ENCODE measurements at regions of chr11 and their contacts with region 1.

Region 1: DNA sequence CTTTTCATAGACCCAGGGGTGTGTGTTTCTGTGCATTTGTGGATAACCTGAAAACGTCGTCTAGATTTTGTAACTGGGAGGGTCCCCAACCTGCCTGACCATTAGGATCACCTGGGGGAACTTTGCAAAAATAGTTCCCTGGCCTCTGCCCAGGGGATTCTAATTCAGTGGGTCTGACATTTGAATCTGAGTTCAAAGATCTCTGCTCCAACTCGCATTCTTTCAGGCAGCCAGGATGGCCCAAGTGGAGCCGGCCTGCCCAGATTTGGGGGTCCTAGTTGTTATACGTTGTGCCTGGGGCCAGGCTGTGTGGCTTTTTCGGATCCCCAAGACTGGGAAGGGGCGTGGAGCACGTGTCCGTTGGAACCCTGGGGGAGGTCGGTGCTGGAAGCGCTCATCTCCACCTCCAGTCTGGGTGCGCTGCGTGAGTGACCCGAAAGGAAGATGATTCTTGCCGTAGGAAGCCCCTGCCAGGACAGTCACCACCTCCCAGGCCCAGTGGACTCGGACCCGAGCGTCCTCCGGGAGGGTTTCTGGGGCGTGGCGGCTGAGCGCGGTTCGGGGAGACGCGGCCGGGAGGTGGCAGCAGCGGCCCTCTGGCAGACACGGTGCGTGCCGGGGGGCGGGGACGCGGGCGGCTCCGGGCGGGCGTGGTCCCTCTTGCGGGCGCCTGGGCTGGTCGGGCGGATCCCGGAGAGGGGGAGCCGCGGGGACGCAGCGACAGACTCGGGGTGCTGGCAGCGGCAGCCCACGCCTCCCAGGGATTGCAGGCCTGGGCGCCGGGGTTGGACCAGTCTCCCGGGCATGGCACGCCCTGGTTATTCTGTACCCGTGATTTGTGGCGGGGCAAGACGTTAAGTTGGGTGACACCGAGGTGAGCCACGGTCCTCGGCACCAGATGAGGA is 29.2 kb upstream of the PLET1 start:
- DNase-seq: peak; percentile 82 to 94 (median 92)
- ATAC-seq: peak; percentile 99
- H3K4me3 ChIP-seq: peak overlapping the region; percentile 33
- H3K27ac ChIP-seq: no peak overlapping the region
- H3K4me1 ChIP-seq: peaks cover 20 to 21% of the 10 kb centered on the region in 2 experiments; a peak in 4 of 5 replicates
- H3K27me3 ChIP-seq: peaks cover 2 to 3% of the 10 kb centered on the region in 2 experiments; a peak in 2 of 5 replicates
- CTCF ChIP-seq: peak; percentile 76 to 95 (median 84)
- EP300 ChIP-seq: no peak
- POLR2A ChIP-seq: no peak
- RAD21 ChIP-seq: peak; percentile 85 to 91

Region 2: DNA sequence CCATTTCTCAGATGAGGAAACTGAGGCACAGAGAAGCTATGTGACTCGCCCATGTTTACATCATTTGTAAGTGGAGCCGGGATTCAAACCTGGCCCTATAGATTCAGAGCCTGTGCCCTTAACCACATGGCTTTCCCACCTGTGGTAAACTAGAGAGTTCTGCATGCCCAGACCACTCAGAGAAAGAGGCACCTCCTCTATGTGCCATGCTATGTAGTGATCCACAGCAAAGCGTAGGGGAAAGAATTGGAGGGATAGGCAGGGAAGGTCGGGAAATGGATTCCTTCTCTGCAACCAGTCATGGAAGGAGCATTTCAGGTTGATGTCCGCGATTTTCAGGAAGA is 1059.7 kb before region 1 on chr11:
- CTCF ChIA-PET with region 1: no interaction called
- POLR2A ChIA-PET with region 1: no interaction called
- in situ Hi-C with region 1: no loop called
- intact Hi-C with region 1: no loop called
- DNase-seq: no peak
- ATAC-seq: peak; percentile 62
- H3K4me3 ChIP-seq: no peak overlapping the region
- H3K27ac ChIP-seq: no peak overlapping the region
- H3K4me1 ChIP-seq: no peaks in the 10 kb centered on the region; a peak in 1 of 5 replicates
- H3K27me3 ChIP-seq: no peaks in the 10 kb centered on the region
- CTCF ChIP-seq: no peak
- EP300 ChIP-seq: no peak
- POLR2A ChIP-seq: no peak
- RAD21 ChIP-seq: no peak

Region 3: GRCh38 chr11:112273066-112273465 is 16.8 kb before region 1 on chr11:
- CTCF ChIA-PET with region 1: no interaction called
- POLR2A ChIA-PET with region 1: no interaction called
- in situ Hi-C with region 1: no loop called
- intact Hi-C with region 1: no loop called
- DNase-seq: no peak
- ATAC-seq: no peak
- H3K4me3 ChIP-seq: no peak overlapping the region
- H3K27ac ChIP-seq: no peak overlapping the region
- H3K4me1 ChIP-seq: peaks cover 0 to 9% of the 10 kb centered on the region in 2 experiments; a peak in 2 of 5 replicates
- H3K27me3 ChIP-seq: no peaks in the 10 kb centered on the region
- CTCF ChIP-seq: no peak
- EP300 ChIP-seq: no peak
- POLR2A ChIP-seq: no peak
- RAD21 ChIP-seq: no peak

Region 4: GRCh38 chr11:112453601-112454577 is 164.0 kb after region 1 on chr11:
- CTCF ChIA-PET with region 1: interaction called, 6 read pairs
- POLR2A ChIA-PET with region 1: no interaction called
- in situ Hi-C with region 1: no loop called
- intact Hi-C with region 1: loop called (anchors 2 kb)
- DNase-seq: peak; percentile 57 to 82 (median 74)
- ATAC-seq: peak; percentile 97
- H3K4me3 ChIP-seq: no peak overlapping the region
- H3K27ac ChIP-seq: no peak overlapping the region
- H3K4me1 ChIP-seq: no peaks in the 10 kb centered on the region
- H3K27me3 ChIP-seq: no peaks in the 10 kb centered on the region
- CTCF ChIP-seq: peak; percentile 64 to 69 (median 66)
- EP300 ChIP-seq: no peak
- POLR2A ChIP-seq: no peak
- RAD21 ChIP-seq: peak in 1 of 2 experiments; percentile 39; a peak in 3 of 4 replicates

Region 5: DNA sequence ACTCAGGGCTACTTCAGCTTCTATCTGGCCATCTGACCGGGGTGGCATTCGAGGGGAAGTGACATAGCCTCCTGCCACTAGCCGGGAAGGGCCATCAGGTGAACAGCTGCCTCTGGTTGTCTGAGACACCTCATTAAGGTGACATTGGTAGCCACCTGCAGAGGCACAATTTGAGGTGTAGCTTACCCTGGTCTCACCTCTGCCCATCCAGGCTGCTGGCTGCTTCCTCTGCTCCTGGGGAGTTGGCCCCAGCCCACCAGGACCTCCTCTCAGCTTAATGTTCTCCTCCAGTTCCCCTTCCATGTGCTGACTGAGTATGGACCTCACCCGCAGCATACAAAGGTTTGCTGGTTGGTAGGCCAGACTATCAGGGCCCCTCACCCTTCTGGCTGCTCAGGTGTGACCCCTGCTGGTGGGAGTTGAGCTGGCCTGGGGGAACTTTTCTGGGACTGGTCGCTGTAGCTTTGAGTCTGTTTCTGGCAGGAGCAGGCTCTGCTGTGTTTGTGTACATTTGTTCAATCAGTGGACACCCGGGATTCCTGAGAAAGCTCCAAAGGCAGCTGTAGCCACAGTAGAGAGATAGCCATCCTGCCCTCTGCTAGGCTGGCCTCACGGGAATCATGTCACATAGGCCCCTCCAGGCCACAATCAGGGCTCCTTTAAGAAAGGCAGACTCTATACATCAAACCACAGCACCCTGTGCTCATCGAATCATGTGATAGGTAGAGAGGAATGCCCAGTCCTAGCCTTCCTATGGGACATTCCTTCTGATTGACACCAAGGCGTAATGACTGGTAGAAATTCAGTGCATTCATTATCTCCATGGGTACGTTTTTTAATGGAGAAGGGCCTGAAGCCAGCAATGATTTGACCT is 265.9 kb after region 1 on chr11:
- CTCF ChIA-PET with region 1: interaction called, 4 read pairs
- POLR2A ChIA-PET with region 1: no interaction called
- in situ Hi-C with region 1: no loop called
- intact Hi-C with region 1: loop called (anchors 1 kb)
- DNase-seq: peak; percentile 55 to 65 (median 59)
- ATAC-seq: peak; percentile 93
- H3K4me3 ChIP-seq: no peak overlapping the region
- H3K27ac ChIP-seq: no peak overlapping the region
- H3K4me1 ChIP-seq: no peaks in the 10 kb centered on the region
- H3K27me3 ChIP-seq: peaks cover 10 to 25% of the 10 kb centered on the region in 2 experiments; a peak in 3 of 5 replicates
- CTCF ChIP-seq: peak; percentile 71 to 85 (median 76)
- EP300 ChIP-seq: no peak
- POLR2A ChIP-seq: no peak
- RAD21 ChIP-seq: peak; percentile 50 to 71

Region 6: GRCh38 chr11:113289431-113290187 is 999.8 kb after region 1 on chr11:
- CTCF ChIA-PET with region 1: no interaction called
- POLR2A ChIA-PET with region 1: no interaction called
- in situ Hi-C with region 1: no loop called
- intact Hi-C with region 1: loop called (anchors 5 kb)
- DNase-seq: peak; percentile 58 to 71 (median 70)
- ATAC-seq: peak; percentile 97
- H3K4me3 ChIP-seq: no peak overlapping the region
- H3K27ac ChIP-seq: no peak overlapping the region
- H3K4me1 ChIP-seq: no peaks in the 10 kb centered on the region
- H3K27me3 ChIP-seq: peaks cover 2 to 46% of the 10 kb centered on the region in 2 experiments
- CTCF ChIP-seq: peak; percentile 85 to 91 (median 89)
- EP300 ChIP-seq: no peak
- POLR2A ChIP-seq: no peak
- RAD21 ChIP-seq: peak; percentile 86 to 91